MCF 10A (cell line): ENCODE measurements at regions of chr20 and their contacts with region 1.

Region 1: GRCh38 chr20:57493091-57493615 is 31.8 kb downstream of the CTCFL start:
- DNase-seq: no peak
- H3K4me3 Mint-ChIP-seq: no peak overlapping the region
- H3K27ac Mint-ChIP-seq: no peak overlapping the region
- H3K4me1 Mint-ChIP-seq: no peaks in the 10 kb centered on the region
- H3K27me3 Mint-ChIP-seq: peaks cover 78% of the 10 kb centered on the region
- CTCF ChIP-seq: no peak

Region 2: DNA sequence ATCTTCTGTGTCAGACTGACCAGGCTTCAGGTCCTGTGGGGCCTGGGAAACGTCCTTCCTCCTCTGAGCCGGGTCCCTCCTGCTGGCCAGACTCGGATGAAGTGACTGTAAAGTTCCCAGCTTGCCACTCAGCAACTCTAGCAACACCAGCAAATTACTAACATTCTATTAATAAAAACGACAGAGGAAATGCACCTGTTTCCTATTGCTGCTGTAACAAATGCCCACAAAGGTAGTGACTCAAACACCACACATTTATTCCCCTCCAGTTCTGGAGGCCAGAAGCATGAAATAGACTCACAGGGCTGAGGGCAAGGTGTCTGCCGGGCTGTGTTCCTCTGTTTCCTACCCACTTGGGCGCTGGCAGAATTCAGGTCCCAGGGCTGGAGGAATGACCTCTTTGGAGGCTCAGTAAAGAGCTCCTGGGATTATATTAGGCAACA is 17.0 kb before region 1 on chr20:
- CTCF ChIA-PET with region 1: interaction called, 11 read pairs
- POLR2A ChIA-PET with region 1: no interaction called
- intact Hi-C with region 1: no loop called
- DNase-seq: no peak
- H3K4me3 Mint-ChIP-seq: no peak overlapping the region
- H3K27ac Mint-ChIP-seq: no peak overlapping the region
- H3K4me1 Mint-ChIP-seq: no peaks in the 10 kb centered on the region
- H3K27me3 Mint-ChIP-seq: peaks cover 74% of the 10 kb centered on the region
- CTCF ChIP-seq: no peak